Left cardiac atrium (tissue), 4 donors: ENCODE measurements at regions of chr6 and their contacts with region 1.

Region 1: GRCh38 chr6:150891888-150892485 is 26.5 kb downstream of the MTHFD1L start:
- DNase-seq: peak; percentile 46
- ATAC-seq: peak; percentile 69 to 77

Region 2: GRCh38 chr6:150667977-150668716 is 223.8 kb before region 1 on chr6:
- intact Hi-C with region 1: no loop called
- DNase-seq: peak; percentile 94
- ATAC-seq: peak; percentile 95 to 96

Region 3: GRCh38 chr6:150857062-150857944 is 34.7 kb before region 1 on chr6:
- intact Hi-C with region 1: no loop called
- DNase-seq: no peak
- ATAC-seq: peak; percentile 63 to 96

Region 4: GRCh38 chr6:151014404-151015100 is 122.6 kb after region 1 on chr6:
- intact Hi-C with region 1: loop called (anchors 1 to 10 kb)
- DNase-seq: peak; percentile 66
- ATAC-seq: peak; percentile 67 to 76

Region 5: GRCh38 chr6:151323791-151324487 is 432.0 kb after region 1 on chr6:
- intact Hi-C with region 1: loop called in 1 of 2 experiments (anchors 2 kb)
- DNase-seq: peak; percentile 83
- ATAC-seq: peak; percentile 92

Region 6: DNA sequence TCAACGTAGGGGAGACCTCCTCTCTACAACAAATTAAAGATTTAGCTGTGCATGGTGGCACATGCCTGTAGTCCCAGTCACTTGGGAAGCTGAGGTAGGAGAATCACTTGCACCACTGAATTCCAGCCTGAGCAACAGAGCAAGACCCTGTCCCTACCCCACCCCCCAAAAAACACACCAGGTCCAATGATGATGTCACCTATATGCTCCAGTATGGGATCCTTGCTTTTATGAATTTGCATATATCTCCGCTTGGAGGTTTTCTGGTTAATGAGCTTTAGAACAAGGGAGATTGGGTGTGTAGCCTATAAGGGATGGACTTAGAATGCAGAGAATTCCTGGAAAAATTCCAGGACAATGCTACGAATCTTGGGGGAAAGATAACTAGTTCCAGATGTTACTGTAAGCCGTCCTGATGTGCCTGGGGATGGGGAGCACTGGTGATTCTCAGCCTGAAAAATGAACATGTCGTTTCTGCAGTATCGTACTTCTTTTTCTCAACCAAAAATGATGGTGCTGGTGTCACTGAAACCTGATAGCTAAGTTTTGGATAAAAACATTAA is 438.2 kb after region 1 on chr6:
- intact Hi-C with region 1: loop called (anchors 1 to 5 kb)
- DNase-seq: no peak
- ATAC-seq: no peak

Region 7: GRCh38 chr6:151335930-151336329 is 443.9 kb after region 1 on chr6:
- intact Hi-C with region 1: loop called (anchors 1 to 5 kb)
- DNase-seq: no peak
- ATAC-seq: no peak